Aorta (tissue), 5 donors: ENCODE measurements at regions of chr4 and their contacts with region 1.

Region 1: GRCh38 chr4:112321776-112322684 is 24.9 kb downstream of the ALPK1 start:
- DNase-seq: peak; percentile 71 to 85
- ATAC-seq: no peak
- H3K4me3 ChIP-seq: no peak overlapping the region
- H3K27ac ChIP-seq: no peak overlapping the region
- H3K4me1 ChIP-seq: no peaks in the 10 kb centered on the region
- H3K27me3 ChIP-seq: no peaks in the 10 kb centered on the region

Region 2: DNA sequence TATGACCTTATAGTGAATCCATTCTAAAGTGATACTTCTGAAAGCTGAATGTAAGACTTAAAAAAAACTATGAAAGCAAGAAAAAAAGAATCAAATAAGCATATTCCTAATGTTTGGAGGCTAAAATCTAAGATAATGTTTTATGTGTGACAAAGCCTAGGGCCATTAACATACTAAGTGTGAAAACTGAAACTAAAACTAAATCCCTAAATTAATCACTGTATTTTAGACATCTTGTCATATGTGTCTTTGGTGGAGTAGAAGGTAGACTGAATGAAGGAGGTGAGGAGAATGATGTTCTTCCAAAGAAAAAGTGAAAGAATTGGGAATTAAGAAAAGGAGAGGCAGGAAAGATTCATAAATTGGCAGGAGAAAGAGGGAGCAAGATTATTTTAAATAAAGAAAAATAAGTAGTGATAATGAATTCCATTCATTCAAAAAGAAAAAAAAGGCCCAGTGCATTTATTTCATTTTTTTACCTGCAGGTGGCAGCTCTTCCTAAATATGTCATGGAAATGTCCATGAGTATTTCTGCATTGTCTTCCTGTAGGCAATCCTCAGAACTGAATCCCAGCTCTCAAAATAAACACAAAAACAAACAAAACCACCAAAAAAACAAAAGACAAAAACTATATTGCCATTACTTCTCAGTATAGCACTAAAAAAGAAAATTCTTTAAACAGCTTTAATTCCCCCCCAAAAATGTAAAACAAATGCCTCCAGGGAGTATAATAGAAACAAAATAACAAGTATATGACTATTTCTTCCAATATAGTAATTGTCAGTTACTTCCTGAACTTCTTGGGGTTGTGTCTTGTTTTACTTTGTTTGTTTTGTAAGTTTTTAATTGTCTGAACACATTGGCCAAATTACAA is 107.4 kb before region 1 on chr4:
- intact Hi-C with region 1: no loop called
- DNase-seq: no peak
- ATAC-seq: no peak
- H3K4me3 ChIP-seq: no peak overlapping the region
- H3K27ac ChIP-seq: no peak overlapping the region
- H3K4me1 ChIP-seq: no peaks in the 10 kb centered on the region
- H3K27me3 ChIP-seq: no peaks in the 10 kb centered on the region

Region 3: GRCh38 chr4:112284662-112285411 is 37.2 kb before region 1 on chr4:
- intact Hi-C with region 1: no loop called
- DNase-seq: peak in 1 of 2 donors; percentile 45
- ATAC-seq: peak; percentile 55
- H3K4me3 ChIP-seq: peak overlapping the region; percentile 51 to 84
- H3K27ac ChIP-seq: peak overlapping the region in 1 of 2 donors; percentile 48
- H3K4me1 ChIP-seq: peaks cover 0 to 2% of the 10 kb centered on the region in 2 donors
- H3K27me3 ChIP-seq: no peaks in the 10 kb centered on the region

Region 4: DNA sequence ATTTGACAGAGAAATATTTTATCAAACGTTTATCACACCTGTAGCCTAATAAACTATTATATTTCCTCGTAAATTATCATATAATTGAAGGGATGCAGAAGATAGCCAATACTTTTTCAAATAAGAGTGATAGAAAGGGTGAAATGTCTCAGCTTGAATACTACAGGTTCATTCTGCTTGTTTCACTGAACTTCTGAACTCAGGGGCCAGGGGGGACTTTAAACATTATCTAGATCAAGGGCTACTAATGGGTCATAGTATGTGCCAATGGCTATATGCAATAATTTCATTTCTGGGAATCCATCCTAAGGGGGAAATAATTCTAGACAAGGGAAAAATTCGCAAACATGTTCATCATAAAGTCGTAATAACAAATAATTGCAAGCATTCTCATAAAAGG is 22.3 kb before region 1 on chr4:
- intact Hi-C with region 1: loop called in 1 of 2 experiments (anchors 2 kb)
- DNase-seq: no peak
- ATAC-seq: no peak
- H3K4me3 ChIP-seq: no peak overlapping the region
- H3K27ac ChIP-seq: no peak overlapping the region
- H3K4me1 ChIP-seq: no peaks in the 10 kb centered on the region
- H3K27me3 ChIP-seq: no peaks in the 10 kb centered on the region

Region 5: GRCh38 chr4:112418092-112418491 is 96.1 kb after region 1 on chr4:
- intact Hi-C with region 1: no loop called
- DNase-seq: no peak
- ATAC-seq: no peak
- H3K4me3 ChIP-seq: no peak overlapping the region
- H3K27ac ChIP-seq: no peak overlapping the region
- H3K4me1 ChIP-seq: no peaks in the 10 kb centered on the region
- H3K27me3 ChIP-seq: no peaks in the 10 kb centered on the region

Region 6: DNA sequence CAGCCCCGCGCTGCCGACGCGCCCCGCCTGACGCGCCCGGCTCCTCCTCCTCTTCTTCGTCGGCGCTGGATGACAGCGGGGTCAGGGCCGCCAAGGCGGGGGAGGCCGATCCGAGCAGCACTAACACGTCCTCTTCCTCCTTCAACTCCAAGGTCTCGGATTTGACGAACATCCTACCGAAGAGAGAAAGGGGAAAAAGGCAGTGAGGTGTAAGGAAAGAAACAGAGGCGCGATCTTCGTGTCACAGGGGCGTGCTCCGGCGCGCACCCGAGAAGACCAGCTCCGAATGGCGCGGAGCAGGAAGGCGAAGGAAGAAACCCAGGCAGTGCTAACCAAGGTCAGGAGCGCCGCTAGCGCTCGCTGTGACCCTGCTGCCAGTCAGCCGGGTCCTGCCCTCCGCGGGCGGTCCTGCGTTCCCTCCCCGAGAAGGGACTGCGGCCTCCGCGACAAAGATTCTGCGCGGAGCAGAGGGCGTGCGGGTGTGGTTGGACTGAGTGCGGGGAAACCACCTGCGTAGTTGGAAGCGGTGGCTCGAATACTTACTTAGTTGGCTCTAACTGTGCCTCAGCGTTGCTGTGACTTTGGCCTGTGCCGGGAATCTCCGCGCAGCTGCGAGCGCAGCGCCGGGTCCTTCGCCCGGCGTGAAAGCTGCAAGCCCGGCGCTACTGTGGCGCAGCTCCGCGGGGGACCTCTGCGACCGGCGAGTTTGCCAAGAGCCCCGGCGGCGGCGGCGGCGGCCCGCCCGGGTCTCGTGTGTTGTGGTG is 193.5 kb after region 1 on chr4:
- intact Hi-C with region 1: loop called in 1 of 2 experiments (anchors 5 kb)
- DNase-seq: peak in 1 of 2 donors; percentile 79
- ATAC-seq: peak; percentile 58
- H3K4me3 ChIP-seq: peak overlapping the region; percentile 14 to 42
- H3K27ac ChIP-seq: no peak overlapping the region
- H3K4me1 ChIP-seq: no peaks in the 10 kb centered on the region
- H3K27me3 ChIP-seq: peaks cover 0 to 2% of the 10 kb centered on the region in 2 donors

Region 7: DNA sequence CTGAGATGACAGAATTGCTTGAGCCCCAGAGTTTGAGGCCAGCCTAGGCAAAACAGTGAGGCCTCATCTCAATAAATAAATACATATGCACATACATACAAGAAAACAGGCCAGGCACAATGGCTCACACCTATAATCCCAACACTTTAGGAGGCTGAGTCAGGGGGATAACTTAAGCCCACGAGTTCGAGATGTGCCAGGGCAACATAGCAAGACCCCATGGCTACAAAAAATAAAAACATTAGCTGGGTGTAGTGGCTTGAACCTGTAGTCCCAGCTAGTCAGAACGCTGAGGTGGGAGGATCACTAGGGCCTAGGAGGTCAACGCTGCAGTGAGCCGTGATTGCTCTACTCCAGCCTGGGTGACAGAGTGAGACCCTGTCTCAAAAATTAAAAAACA is 245.5 kb after region 1 on chr4:
- intact Hi-C with region 1: no loop called
- DNase-seq: no peak
- ATAC-seq: no peak
- H3K4me3 ChIP-seq: no peak overlapping the region
- H3K27ac ChIP-seq: no peak overlapping the region
- H3K4me1 ChIP-seq: no peaks in the 10 kb centered on the region
- H3K27me3 ChIP-seq: no peaks in the 10 kb centered on the region